ENCODE measurements at regions of chr18 and their contacts with region 1.

Region 1: GRCh38 chr18:63492851-63493250 is 16.1 kb downstream of the SERPINB5 start:
- DNase-seq: no peak
- ATAC-seq: no peak
- H3K4me3 Mint-ChIP-seq: no peak overlapping the region
- H3K27ac Mint-ChIP-seq: no peak overlapping the region
- H3K4me1 Mint-ChIP-seq: no peaks in the 10 kb centered on the region
- H3K27me3 Mint-ChIP-seq: peaks cover 9% of the 10 kb centered on the region
- CTCF ChIP-seq: no peak

Region 2: GRCh38 chr18:63367053-63367953 is 125.5 kb before region 1 on chr18 and contains the start of gene KDSR:
- CTCF ChIA-PET with region 1: no interaction called
- POLR2A ChIA-PET with region 1: no interaction called
- intact Hi-C with region 1: no loop called
- DNase-seq: peak; percentile 86
- ATAC-seq: peak; percentile 84
- H3K4me3 Mint-ChIP-seq: peak within 1 kb of the TSS; percentile 81
- H3K27ac Mint-ChIP-seq: peak within 1 kb of the TSS; percentile 86
- H3K4me1 Mint-ChIP-seq: peaks cover 29% of the 10 kb centered on the region
- H3K27me3 Mint-ChIP-seq: no peaks in the 10 kb centered on the region
- CTCF ChIP-seq: no peak
- total RNA-seq, gene KDSR: 53.4 TPM

Region 3: DNA sequence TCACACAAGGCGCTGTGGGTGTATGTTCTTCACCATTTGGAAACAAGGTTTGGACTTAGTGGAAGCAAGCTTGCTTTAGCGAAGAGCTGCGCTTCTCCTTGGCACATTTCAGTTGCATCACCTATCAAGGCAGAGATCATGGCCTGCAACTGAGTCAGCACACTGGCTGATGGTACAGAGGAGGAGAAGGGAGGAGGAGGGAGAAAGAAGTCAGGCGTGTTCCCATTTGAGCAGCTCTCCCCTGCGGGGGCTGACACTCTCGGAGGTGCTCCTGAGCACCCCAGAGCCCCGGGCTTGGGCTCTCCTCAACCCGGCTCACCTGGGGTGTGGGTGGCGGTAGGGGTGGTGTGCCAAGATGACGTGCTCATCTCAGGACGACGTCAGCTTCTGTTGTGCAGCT is 22.1 kb before region 1 on chr18:
- CTCF ChIA-PET with region 1: no interaction called
- POLR2A ChIA-PET with region 1: no interaction called
- intact Hi-C with region 1: no loop called
- DNase-seq: no peak
- ATAC-seq: no peak
- H3K4me3 Mint-ChIP-seq: no peak overlapping the region
- H3K27ac Mint-ChIP-seq: no peak overlapping the region
- H3K4me1 Mint-ChIP-seq: no peaks in the 10 kb centered on the region
- H3K27me3 Mint-ChIP-seq: no peaks in the 10 kb centered on the region
- CTCF ChIP-seq: no peak

Region 4: GRCh38 chr18:63505566-63506335 is 12.9 kb after region 1 on chr18:
- CTCF ChIA-PET with region 1: interaction called, 11 read pairs
- POLR2A ChIA-PET with region 1: no interaction called
- intact Hi-C with region 1: no loop called
- DNase-seq: peak; percentile 63
- ATAC-seq: peak; percentile 66
- H3K4me3 Mint-ChIP-seq: no peak overlapping the region
- H3K27ac Mint-ChIP-seq: no peak overlapping the region
- H3K4me1 Mint-ChIP-seq: no peaks in the 10 kb centered on the region
- H3K27me3 Mint-ChIP-seq: peaks cover 22% of the 10 kb centered on the region
- CTCF ChIP-seq: peak; percentile 72